Activated CD4-positive, alpha-beta T cell treated with anti-CD3 and anti-CD28 coated beads, Interleukin-2, amount 10 ng/mL, durations not matched to agents 24 days and 14 days (primary cell): ENCODE measurements at regions of chr11 and their contacts with region 1.

Region 1: GRCh38 chr11:76444384-76445123 is at the start of gene EMSY:
- DNase-seq: peak; percentile 97
- H3K4me3 Mint-ChIP-seq: peak within 1 kb of the TSS; percentile 97
- H3K27ac Mint-ChIP-seq: peak within 1 kb of the TSS; percentile 97
- H3K4me1 Mint-ChIP-seq: peaks cover 26% of the 10 kb centered on the region
- H3K27me3 Mint-ChIP-seq: no peaks in the 10 kb centered on the region
- total RNA-seq, gene EMSY: 32.1 and 33.2 TPM in 2 replicates

Region 2: GRCh38 chr11:76207642-76208401 is 236.7 kb before region 1 on chr11:
- intact Hi-C with region 1: loop called (anchors 2 kb)
- DNase-seq: peak; percentile 95
- H3K4me3 Mint-ChIP-seq: peak overlapping the region; percentile 84
- H3K27ac Mint-ChIP-seq: no peak overlapping the region
- H3K4me1 Mint-ChIP-seq: peaks cover 17% of the 10 kb centered on the region
- H3K27me3 Mint-ChIP-seq: peaks cover 58% of the 10 kb centered on the region

Region 3: DNA sequence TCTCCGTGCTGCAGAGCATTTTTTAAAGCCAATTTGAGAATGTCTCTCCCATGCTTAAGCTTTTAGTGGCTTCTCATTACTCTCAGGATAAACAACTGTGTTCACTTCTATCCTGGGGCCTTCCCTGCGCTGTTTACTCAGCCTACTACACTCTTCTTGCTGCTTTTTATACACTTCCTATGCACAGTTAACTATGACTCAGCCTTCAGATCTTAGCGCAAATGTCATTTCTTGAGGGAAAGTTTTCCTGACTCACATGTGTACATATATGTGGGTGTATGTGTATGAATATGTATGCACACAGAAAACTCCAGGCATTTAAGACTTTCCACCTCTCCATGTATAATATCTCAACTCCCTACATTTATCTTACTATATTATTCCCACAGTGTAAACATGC is 73.4 kb before region 1 on chr11:
- intact Hi-C with region 1: loop called (anchors 2 kb)
- DNase-seq: peak; percentile 61
- H3K4me3 Mint-ChIP-seq: peak overlapping the region; percentile 60
- H3K27ac Mint-ChIP-seq: peak overlapping the region; percentile 88
- H3K4me1 Mint-ChIP-seq: peaks cover 32% of the 10 kb centered on the region
- H3K27me3 Mint-ChIP-seq: no peaks in the 10 kb centered on the region

Region 4: GRCh38 chr11:76419896-76420295 is 24.7 kb before region 1 on chr11:
- intact Hi-C with region 1: loop called (anchors 2 kb)
- DNase-seq: peak; percentile 60
- H3K4me3 Mint-ChIP-seq: no peak overlapping the region
- H3K27ac Mint-ChIP-seq: no peak overlapping the region
- H3K4me1 Mint-ChIP-seq: peaks cover 7% of the 10 kb centered on the region
- H3K27me3 Mint-ChIP-seq: peaks cover 9% of the 10 kb centered on the region

Region 5: GRCh38 chr11:76860539-76861475 is 416.3 kb after region 1 on chr11 and contains the start of gene ACER3:
- intact Hi-C with region 1: loop called (anchors 1 kb)
- DNase-seq: peak; percentile 97
- H3K4me3 Mint-ChIP-seq: peak within 1 kb of the TSS; percentile 90
- H3K27ac Mint-ChIP-seq: peak within 1 kb of the TSS; percentile 84
- H3K4me1 Mint-ChIP-seq: peaks cover 19% of the 10 kb centered on the region
- H3K27me3 Mint-ChIP-seq: no peaks in the 10 kb centered on the region
- total RNA-seq, gene ACER3: 12.5 and 13.8 TPM in 2 replicates